Transverse colon (tissue), 4 donors: ENCODE measurements at regions of chr22 and their contacts with region 1.

Region 1: DNA sequence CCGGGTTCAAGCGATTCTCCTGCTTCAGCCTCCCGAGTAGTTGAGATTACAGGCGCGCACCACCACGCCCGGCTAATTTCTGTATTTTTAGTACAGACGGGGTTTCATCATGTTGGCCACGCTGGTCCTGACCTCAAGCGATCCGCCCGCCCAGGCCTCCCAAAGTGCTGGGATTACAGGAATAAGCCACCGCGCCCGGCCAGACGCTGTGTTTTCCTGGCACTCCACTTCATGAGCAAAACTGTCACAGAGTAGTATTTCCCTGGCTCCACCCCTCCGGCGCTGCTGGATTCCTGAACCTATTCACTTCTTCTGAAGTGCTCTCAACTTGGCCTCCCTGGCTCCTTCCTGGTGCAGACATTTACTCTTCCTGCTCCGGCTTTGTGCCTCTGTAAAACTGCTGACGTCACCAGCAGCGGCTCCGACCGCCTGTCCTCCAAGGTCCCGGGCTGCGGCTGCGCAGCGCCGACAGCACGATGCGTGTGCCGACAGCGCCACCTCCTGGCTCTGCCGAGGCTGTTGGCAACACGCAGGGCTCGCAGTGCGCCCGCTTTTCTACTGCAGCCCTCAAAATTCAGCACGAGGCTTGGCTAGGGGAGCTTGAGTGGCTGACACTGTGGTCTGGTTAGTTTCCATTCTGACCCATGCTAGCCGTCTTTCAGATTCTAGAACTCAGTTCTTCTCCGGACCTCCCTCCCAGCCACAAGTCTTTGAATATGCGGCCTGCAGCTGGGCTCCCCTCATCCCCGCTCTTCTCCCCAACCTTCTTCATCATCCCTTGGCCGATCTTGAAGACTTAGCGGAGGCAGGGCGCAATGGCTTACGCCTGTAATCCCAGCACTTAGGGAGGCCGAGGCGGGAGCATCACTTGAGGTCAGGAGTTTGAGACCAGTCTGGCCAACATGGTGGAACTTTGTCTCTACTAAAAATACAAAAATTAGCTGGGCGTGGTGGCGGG is 36.6 kb downstream of the APOL3 start:
- DNase-seq: peak; percentile 96
- H3K4me3 ChIP-seq: peak overlapping the region in 2 of 4 donors; percentile 6 to 35
- H3K27ac ChIP-seq: peak overlapping the region; percentile 82 to 88 (median 86)
- H3K4me1 ChIP-seq: peaks cover 0 to 11% (median 2%) of the 10 kb centered on the region in 4 donors
- H3K27me3 ChIP-seq: peaks cover 5% of the 10 kb centered on the region
- CTCF ChIP-seq: peak; percentile 95 to 99 (median 98)
- EP300 ChIP-seq: peak; percentile 85
- POLR2A ChIP-seq: peak; percentile 49

Region 2: DNA sequence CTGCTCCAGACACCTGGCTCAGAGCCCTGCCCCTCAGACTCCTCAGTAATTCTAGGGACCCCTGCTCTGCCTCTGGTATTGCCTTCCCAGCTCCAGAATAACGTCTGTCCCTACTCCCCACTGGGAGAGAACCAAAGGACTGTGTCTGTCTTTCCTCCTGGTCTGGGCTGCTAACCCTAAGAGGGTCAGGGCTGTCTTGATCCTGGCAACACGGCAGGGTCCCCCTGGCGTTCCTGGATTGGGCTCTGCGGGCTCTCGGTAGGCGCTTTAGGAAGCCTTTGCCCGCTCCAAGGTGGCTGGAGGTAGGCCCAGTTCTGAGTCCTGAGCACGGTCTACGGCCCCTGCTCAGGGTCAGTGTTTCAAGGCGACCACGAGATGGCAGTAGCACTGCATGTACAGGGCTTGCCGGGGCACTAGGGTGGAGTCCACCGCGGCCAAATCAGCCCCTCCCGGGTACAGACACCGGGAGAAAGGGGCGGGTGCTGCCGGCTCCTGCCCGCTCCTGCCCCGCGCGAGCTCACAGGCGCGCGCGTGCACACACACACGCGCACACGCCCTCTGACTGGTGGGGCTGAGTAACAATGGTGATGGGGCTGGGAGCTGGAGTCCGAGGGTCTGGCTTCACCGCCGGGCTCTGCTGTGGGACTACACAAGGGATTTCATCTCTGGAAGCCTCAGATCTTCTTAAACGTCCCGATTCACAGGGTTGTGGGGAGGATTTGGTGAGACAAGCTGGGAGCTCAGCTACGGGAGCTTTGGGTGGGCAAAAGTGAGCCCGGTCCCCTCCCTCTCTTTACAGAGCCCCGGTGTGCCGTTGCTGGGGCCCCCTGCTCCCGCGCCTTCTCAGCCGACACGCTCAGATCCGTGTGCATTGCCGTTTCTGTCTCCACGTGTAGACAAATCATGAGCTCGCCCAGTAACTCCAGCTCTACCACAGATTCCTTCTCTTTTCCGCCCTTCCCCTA is 773.1 kb before region 1 on chr22:
- in situ Hi-C with region 1: loop called in 1 of 4 experiments (anchors 10 kb)
- intact Hi-C with region 1: no loop called
- DNase-seq: peak; percentile 95
- H3K4me3 ChIP-seq: peak overlapping the region; percentile 29 to 58 (median 41)
- H3K27ac ChIP-seq: peak overlapping the region; percentile 62 to 87 (median 79)
- H3K4me1 ChIP-seq: peaks cover 8 to 25% (median 19%) of the 10 kb centered on the region in 4 donors
- H3K27me3 ChIP-seq: no peaks in the 10 kb centered on the region
- CTCF ChIP-seq: peak; percentile 84 to 97 (median 87)
- EP300 ChIP-seq: no peak
- POLR2A ChIP-seq: peak; percentile 32

Region 3: DNA sequence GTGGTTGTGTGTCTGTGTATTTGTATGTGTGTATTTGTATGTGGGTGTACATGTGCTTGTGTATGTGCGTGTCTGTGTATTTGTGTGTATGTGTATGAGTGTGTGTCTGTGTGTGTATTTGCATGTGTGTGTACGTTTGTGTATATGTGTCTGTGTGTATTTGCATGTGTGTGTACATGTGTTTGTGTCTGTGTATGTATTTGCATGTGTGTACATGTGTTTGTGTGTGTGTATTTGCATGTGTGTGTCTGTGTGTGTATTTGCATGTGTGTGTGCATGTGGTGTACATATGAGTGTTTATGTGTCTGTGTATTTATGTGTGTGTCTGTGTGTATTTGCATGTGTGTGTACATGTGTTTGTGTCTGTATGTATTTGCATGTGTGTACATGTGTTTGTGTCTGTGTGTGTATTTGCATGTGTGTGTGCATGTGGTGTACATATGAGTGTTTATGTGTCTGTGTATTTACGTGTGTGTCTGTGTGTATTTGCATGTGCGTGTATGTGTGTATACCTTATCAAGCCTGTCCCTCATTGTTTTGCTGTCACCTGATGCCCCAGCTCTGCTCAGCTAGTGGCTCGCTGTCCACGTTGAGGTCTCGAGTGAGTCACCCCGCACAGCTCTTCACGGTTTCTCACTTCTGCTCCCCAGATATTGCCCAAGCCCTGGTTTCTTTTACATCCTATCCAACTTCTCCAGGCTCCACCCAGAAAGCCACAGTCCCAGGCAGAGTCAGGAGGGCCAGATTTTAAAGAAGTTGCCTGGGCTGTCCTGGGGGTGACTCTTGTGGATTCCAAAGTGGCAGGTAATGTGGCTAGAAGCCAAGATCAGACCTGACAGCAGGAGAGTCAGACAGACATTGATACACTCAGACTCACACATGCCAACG is 522.0 kb before region 1 on chr22:
- in situ Hi-C with region 1: loop called in 1 of 4 experiments (anchors 25 kb)
- intact Hi-C with region 1: no loop called
- DNase-seq: no peak
- H3K4me3 ChIP-seq: no peak overlapping the region
- H3K27ac ChIP-seq: no peak overlapping the region
- H3K4me1 ChIP-seq: peaks cover 0 to 7% (median 3%) of the 10 kb centered on the region in 4 donors
- H3K27me3 ChIP-seq: no peaks in the 10 kb centered on the region
- CTCF ChIP-seq: no peak
- EP300 ChIP-seq: no peak
- POLR2A ChIP-seq: no peak

Region 4: DNA sequence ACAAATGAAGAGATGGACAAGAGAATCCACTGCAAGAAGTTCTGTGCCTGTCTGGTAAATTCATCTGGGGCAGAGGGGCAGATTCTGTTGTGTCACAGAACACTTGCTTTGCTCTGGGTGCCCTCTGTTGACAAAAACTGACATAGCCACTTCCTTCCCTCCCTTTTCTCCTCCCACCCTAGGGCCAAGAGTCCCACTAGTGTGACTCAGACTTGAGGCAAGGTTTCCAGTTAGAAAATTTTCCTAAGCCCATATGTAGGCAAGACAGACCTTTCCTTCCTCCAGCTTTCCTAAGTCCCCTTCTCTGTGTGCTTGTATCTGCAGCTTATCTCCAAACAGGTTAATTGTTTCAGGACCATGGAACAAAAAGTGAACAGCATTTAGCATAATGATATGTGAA is 202.2 kb before region 1 on chr22:
- in situ Hi-C with region 1: loop called in 1 of 4 experiments (anchors 10 kb)
- intact Hi-C with region 1: loop called (anchors 10 kb)
- DNase-seq: peak; percentile 70
- H3K4me3 ChIP-seq: no peak overlapping the region
- H3K27ac ChIP-seq: peak overlapping the region; percentile 30 to 70 (median 60)
- H3K4me1 ChIP-seq: peaks cover 0 to 48% (median 21%) of the 10 kb centered on the region in 4 donors
- H3K27me3 ChIP-seq: no peaks in the 10 kb centered on the region
- CTCF ChIP-seq: peak; percentile 50 to 62 (median 56)
- EP300 ChIP-seq: no peak
- POLR2A ChIP-seq: no peak

Region 5: GRCh38 chr22:36065775-36066559 is 58.0 kb before region 1 on chr22:
- in situ Hi-C with region 1: loop called in 1 of 4 experiments (anchors 5 kb)
- intact Hi-C with region 1: loop called (anchors 2 kb)
- DNase-seq: peak; percentile 87
- H3K4me3 ChIP-seq: peak overlapping the region; percentile 31 to 60 (median 38)
- H3K27ac ChIP-seq: peak overlapping the region; percentile 79 to 84 (median 82)
- H3K4me1 ChIP-seq: peaks cover 0 to 17% (median 3%) of the 10 kb centered on the region in 4 donors
- H3K27me3 ChIP-seq: no peaks in the 10 kb centered on the region
- CTCF ChIP-seq: peak; percentile 99 to 100 (median 100)
- EP300 ChIP-seq: peak; percentile 1
- POLR2A ChIP-seq: peak; percentile 18

Region 6: DNA sequence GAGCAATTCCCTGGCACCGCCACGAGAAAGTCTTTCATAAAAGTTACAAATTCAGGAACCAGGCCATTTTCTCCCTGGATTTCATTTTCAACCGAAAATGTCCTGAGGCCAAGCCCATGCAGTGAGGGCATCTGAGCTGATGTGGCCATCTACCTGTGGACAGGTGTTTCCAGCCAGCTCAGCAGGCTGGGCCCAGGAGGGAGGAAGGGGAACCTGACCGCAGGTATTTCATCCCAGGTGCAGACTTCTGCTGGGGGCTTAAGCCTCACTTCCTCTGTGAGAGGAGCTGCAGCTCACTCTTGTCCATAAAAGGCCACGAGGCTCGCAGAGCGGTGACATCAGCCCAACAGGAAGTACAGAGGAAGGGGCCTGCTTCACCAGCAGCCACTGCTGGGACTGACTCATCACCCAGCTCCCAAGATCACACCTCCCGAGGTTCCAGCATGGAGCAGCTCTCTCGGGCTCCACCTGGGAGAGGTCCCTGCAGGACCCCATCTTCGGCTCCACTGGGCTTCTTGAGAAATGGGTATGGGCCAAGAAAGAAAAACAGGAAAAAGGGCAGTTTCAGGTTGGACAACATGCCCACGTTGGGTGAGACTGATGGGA is 207.5 kb after region 1 on chr22:
- in situ Hi-C with region 1: no loop called
- intact Hi-C with region 1: no loop called
- DNase-seq: peak; percentile 84
- H3K4me3 ChIP-seq: peak overlapping the region in 1 of 4 donors; percentile 13
- H3K27ac ChIP-seq: peak overlapping the region; percentile 92 to 99 (median 96)
- H3K4me1 ChIP-seq: peaks cover 87 to 99% (median 98%) of the 10 kb centered on the region in 4 donors
- H3K27me3 ChIP-seq: no peaks in the 10 kb centered on the region
- CTCF ChIP-seq: no peak
- EP300 ChIP-seq: peak; percentile 31
- POLR2A ChIP-seq: peak; percentile 43